ENCODE measurements at regions of chr15 and their contacts with region 1.

Region 1: DNA sequence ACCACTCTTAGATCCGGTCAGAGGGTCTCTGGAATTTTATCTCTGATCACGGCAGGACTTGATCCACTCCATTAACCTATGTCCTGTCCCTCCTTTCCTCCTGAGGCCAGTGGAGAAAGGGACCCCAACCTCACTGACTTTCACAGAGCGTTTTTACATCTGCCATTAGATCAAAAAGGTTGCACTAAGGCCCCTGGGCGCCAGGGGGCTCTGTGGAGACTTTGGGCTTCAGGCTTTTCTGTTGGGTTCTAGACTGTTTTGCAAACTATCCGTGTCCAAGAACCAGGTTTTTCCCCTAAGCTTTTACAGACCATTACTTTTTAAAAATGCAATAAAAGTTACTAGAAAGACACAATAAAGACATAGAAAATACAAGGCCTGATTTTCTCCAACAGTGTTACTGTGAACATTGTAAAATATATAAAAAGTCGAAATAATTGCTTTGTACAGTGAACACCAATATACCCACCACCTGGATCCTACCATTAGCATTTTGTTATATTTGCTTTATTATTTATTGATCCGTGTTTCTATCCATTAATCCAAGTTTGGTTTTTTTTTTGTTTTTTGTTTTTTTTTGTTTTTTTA is 159.7 kb downstream of the POLR2M start:
- DNase-seq: peak; percentile 68 to 81 (median 77)
- H3K4me3 ChIP-seq: no peak overlapping the region
- H3K27ac ChIP-seq: no peak overlapping the region
- H3K4me1 ChIP-seq: peaks cover 0 to 19% (median 14%) of the 10 kb centered on the region in 4 experiments
- H3K27me3 ChIP-seq: peaks cover 2 to 80% (median 38%) of the 10 kb centered on the region in 5 experiments

Region 2: DNA sequence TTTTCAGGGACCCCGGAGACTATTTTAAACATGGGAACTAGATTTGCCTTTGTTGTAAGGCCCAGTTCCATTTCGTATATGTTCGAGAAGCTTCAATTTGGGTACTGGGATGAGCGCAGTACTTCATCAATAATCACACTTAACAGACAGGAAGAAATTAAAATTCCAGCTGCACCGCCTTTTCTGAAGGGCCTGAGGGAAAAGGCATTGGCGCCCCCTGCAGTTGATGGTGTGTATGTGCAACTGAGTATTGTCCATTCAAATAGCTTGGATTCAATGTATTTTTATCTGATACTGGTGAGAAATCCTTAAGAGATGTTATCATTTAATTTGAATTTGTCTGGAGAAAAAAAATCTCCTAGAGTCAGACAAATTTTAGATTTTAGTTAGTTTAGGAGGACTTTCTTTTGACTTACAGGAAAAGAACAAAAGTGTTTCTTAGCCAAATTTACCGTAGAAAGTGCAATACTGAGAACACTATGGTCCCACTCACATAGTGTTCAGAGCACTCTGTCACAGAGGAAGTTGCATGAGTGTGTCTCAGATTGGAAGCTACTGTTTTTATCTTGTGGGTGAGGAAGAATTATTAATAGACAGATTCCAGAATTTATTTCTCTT is 204.7 kb after region 1 on chr15:
- CTCF ChIA-PET with region 1: interaction called, 20 read pairs
- POLR2A ChIA-PET with region 1: no interaction called
- DNase-seq: peak; percentile 48 to 69 (median 61)
- H3K4me3 ChIP-seq: no peak overlapping the region
- H3K27ac ChIP-seq: no peak overlapping the region
- H3K4me1 ChIP-seq: peaks cover 0 to 6% (median 6%) of the 10 kb centered on the region in 4 experiments
- H3K27me3 ChIP-seq: peaks cover 4 to 52% (median 19%) of the 10 kb centered on the region in 5 experiments

Region 3: GRCh38 chr15:58159827-58160386 is 293.7 kb after region 1 on chr15:
- CTCF ChIA-PET with region 1: no interaction called
- POLR2A ChIA-PET with region 1: no interaction called
- DNase-seq: no peak
- H3K4me3 ChIP-seq: no peak overlapping the region
- H3K27ac ChIP-seq: no peak overlapping the region
- H3K4me1 ChIP-seq: no peaks in the 10 kb centered on the region
- H3K27me3 ChIP-seq: peaks cover 0 to 4% (median 0%) of the 10 kb centered on the region in 5 experiments

Region 4: DNA sequence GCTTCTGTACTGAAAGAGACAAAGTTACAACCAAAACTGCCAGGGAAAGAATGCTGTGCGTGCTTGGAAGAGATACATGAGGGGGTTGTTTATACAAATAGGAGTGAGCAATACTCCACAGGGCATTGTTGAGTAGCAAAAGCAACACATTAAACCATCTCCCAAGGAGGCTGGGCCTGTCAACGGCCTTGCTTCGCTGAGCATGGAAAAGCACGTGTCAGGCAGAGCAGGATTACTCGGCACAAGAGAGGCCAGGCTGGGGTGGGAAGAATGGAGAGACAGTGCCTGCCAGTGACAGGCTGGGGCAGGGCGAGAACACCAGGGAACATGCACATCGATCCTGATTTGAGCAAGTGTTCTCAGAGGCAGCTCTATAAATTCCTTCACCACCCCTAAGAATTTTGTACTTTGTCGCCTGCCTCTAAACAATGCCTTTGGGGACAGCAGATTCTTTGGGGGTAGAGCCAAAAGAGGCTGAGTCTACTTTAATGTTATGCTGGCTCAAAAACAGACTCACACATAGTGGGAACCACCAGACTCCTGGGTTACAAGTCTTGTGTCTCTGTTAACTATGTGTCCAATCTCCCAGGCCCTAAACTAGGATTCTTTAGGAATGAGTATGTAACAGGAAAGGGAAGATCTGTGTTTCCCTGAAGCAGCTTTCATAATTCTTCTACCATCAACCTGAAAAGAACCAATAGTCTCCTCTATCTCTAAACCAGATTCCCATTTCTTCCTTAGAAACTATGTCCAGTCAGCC is 632.8 kb after region 1 on chr15:
- CTCF ChIA-PET with region 1: no interaction called
- POLR2A ChIA-PET with region 1: no interaction called
- DNase-seq: no peak
- H3K4me3 ChIP-seq: no peak overlapping the region
- H3K27ac ChIP-seq: no peak overlapping the region
- H3K4me1 ChIP-seq: peaks cover 0 to 12% (median 3%) of the 10 kb centered on the region in 4 experiments
- H3K27me3 ChIP-seq: no peaks in the 10 kb centered on the region

Measured in common myeloid progenitor, CD34-positive (primary cell).